Activated CD4-positive, alpha-beta T cell treated with anti-CD3 and anti-CD28 coated beads for 36 hours (primary cell): ENCODE measurements at regions of chr5 and their contacts with region 1.

Region 1: GRCh38 chr5:79857714-79858409 is 133.2 kb downstream of the MTX3 start:
- DNase-seq: peak; percentile 91
- ATAC-seq: peak; percentile 60
- H3K4me3 Mint-ChIP-seq: no peak overlapping the region
- H3K27ac Mint-ChIP-seq: no peak overlapping the region
- H3K4me1 Mint-ChIP-seq: peaks cover 5% of the 10 kb centered on the region
- H3K27me3 Mint-ChIP-seq: no peaks in the 10 kb centered on the region

Region 2: GRCh38 chr5:78886341-78887230 is 971.3 kb before region 1 on chr5:
- CTCF ChIA-PET with region 1: no interaction called
- POLR2A ChIA-PET with region 1: no interaction called
- intact Hi-C with region 1: no loop called
- DNase-seq: no peak
- ATAC-seq: no peak
- H3K4me3 Mint-ChIP-seq: no peak overlapping the region
- H3K27ac Mint-ChIP-seq: no peak overlapping the region
- H3K4me1 Mint-ChIP-seq: peaks cover 18% of the 10 kb centered on the region
- H3K27me3 Mint-ChIP-seq: no peaks in the 10 kb centered on the region

Region 3: DNA sequence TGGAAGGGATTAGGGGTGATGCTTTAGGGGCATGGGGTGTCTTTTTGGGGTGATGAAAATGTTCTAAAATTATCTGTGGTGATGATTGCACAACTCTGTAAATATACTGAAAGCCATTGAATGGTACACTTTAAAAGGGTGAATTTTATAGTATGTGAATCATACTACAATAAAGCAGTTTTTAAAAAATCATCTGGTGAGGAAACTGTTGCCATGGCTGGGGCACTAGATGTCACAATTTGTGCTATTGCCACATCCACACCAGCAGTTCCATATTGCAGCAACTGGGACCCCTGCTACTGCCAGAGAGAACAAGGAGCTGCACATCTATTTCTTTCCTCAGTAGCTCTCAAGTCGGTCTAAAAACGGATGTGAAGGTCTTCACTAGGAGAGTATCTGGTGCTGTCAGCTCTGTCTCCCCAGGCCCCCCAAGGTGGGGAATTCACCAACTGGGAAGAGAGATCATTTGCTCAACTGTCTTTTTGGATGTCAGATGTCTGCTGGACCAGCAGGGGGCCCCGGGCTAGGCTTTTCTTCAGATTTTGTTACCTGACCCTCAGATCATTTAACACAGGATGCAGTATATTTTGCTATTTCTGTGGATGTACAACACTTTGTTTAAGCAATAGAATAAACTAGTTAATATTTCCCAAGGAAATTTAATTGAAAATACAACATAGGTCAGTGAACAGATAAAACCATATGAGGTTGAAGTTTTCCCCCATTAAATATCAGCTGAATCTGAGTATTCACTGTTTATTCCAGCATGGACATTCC is 155.1 kb before region 1 on chr5:
- CTCF ChIA-PET with region 1: interaction called, 17 read pairs
- POLR2A ChIA-PET with region 1: no interaction called
- intact Hi-C with region 1: loop called (anchors 1 to 2 kb)
- DNase-seq: peak; percentile 62
- ATAC-seq: no peak
- H3K4me3 Mint-ChIP-seq: no peak overlapping the region
- H3K27ac Mint-ChIP-seq: no peak overlapping the region
- H3K4me1 Mint-ChIP-seq: peaks cover 15% of the 10 kb centered on the region
- H3K27me3 Mint-ChIP-seq: no peaks in the 10 kb centered on the region